Mammary epithelial cell (primary cell): ENCODE measurements at regions of chr17 and their contacts with region 1.

Region 1: DNA sequence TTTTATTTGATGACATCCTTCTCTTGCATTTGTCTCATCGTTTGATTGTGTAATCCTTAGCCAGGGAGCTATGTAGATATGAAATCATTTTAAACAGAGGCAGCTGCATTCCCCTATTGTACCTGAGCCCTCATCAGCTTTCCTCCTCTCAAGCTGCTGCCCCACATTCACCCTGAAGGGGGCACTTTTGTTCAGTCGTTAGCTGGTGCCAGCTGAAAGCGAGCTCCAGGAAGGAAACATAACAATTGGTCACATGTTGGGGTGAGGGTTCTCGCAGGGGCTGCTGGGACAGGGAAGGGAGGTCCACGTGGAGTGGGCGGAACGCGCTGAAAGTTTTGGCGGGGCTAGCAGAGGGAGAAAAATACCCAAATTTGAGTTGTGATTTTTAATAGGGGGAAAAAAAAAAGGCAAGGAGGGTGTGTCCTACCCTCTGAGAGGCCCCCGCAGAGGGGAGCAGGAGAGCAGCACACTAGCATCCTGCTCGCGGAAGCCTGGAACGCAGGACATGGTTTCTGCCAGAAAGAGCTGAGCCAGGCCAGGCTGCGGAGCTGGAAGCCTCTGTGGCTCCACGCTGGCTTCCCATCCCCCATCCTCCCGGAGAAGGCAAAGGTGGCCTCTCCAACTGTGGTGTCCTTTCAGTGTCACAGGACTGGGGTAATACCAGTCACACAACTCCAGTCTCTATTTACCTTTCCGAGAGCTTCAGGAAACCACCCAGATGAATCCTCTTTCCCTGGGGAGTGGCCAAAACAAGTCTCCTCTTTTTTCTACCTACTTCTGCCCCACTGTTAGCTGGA is 8.5 kb upstream of the MSL1 start:
- DNase-seq: peak; percentile 93
- H3K4me3 ChIP-seq: peak overlapping the region; percentile 26 to 43 (median 34)
- H3K27ac ChIP-seq: peak overlapping the region; percentile 70
- H3K4me1 ChIP-seq: peaks cover 45% of the 10 kb centered on the region
- H3K27me3 ChIP-seq: no peaks in the 10 kb centered on the region
- CTCF ChIP-seq: peak; percentile 51 to 90

Region 2: DNA sequence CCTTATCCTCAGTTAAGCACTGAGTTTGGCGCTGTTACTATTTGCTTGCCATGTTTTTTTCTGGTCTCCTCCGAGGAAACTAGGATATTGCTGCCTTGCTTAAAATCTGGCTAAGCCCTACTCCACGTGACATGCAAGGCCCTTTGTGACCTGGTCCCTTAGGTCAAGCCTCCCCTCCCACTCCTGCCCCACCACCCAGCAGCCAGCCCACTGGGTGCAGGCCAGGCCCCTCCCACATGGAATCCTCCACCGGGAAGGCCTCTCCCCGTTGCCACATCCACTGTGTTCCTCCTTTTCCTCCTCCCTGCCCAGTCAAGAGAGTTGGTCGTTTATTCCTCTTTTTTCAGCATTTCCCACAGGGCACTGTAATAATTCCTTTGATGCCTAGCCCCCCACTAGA is 116.5 kb before region 1 on chr17:
- CTCF ChIA-PET with region 1: interaction called, 22 read pairs
- dilution Hi-C with region 1: no loop called
- in situ Hi-C with region 1: no loop called
- intact Hi-C with region 1: no loop called
- DNase-seq: no peak
- H3K4me3 ChIP-seq: no peak overlapping the region
- H3K27ac ChIP-seq: no peak overlapping the region
- H3K4me1 ChIP-seq: no peaks in the 10 kb centered on the region
- H3K27me3 ChIP-seq: no peaks in the 10 kb centered on the region
- CTCF ChIP-seq: no peak

Region 3: GRCh38 chr17:40038882-40039513 is 74.3 kb before region 1 on chr17:
- CTCF ChIA-PET with region 1: interaction called, 7 read pairs
- dilution Hi-C with region 1: no loop called
- in situ Hi-C with region 1: no loop called
- intact Hi-C with region 1: loop called (anchors 1 kb)
- DNase-seq: peak; percentile 38
- H3K4me3 ChIP-seq: no peak overlapping the region
- H3K27ac ChIP-seq: no peak overlapping the region
- H3K4me1 ChIP-seq: peaks cover 3% of the 10 kb centered on the region
- H3K27me3 ChIP-seq: no peaks in the 10 kb centered on the region
- CTCF ChIP-seq: peak; percentile 56 to 68

Region 4: GRCh38 chr17:40056379-40057010 is 56.8 kb before region 1 on chr17:
- CTCF ChIA-PET with region 1: no interaction called
- dilution Hi-C with region 1: no loop called
- in situ Hi-C with region 1: no loop called
- intact Hi-C with region 1: no loop called
- DNase-seq: no peak
- H3K4me3 ChIP-seq: no peak overlapping the region
- H3K27ac ChIP-seq: no peak overlapping the region
- H3K4me1 ChIP-seq: peaks cover 3% of the 10 kb centered on the region
- H3K27me3 ChIP-seq: no peaks in the 10 kb centered on the region
- CTCF ChIP-seq: no peak

Region 5: DNA sequence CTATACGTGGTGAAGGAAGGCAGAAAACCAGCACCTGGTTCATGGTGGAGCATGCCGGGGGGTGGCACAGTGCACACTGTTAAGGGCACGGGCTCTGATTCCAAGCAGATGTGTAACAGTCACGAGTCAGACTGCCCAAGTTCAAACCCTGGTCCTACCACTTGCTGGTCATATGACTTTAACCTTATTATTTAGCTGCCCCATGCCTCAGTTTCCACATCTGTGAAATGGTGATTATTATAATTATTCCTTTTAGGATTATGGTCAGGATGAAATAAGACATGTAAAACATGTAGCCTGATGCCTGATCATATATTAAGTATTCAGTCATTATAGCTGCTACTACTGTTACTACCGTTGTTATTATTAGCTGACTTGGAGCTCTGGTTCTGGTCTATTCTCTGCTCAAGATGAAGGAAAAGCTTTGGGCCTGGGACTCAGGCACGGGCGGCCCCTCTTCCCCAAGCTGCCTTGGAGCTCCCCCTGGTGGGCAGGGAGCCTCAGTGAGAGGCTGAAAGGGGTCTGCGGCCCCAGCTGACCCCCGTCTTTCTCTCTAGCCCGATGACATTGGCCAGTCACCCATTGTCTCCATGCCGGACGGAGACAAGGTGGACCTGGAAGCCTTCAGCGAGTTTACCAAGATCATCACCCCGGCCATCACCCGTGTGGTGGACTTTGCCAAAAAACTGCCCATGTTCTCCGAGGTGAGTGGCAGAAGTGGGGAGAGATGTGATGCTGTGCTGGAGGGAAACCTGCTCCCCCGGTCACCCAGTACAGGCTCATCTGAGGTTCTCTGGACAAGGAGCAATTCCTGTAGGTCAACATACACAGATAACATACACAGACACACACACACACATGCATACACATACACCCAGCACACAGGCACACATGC is 26.9 kb before region 1 on chr17:
- CTCF ChIA-PET with region 1: no interaction called
- dilution Hi-C with region 1: no loop called
- in situ Hi-C with region 1: no loop called
- intact Hi-C with region 1: loop called (anchors 2 kb)
- DNase-seq: no peak
- H3K4me3 ChIP-seq: no peak overlapping the region
- H3K27ac ChIP-seq: no peak overlapping the region
- H3K4me1 ChIP-seq: no peaks in the 10 kb centered on the region
- H3K27me3 ChIP-seq: no peaks in the 10 kb centered on the region
- CTCF ChIP-seq: peak; percentile 54 to 87

Region 6: DNA sequence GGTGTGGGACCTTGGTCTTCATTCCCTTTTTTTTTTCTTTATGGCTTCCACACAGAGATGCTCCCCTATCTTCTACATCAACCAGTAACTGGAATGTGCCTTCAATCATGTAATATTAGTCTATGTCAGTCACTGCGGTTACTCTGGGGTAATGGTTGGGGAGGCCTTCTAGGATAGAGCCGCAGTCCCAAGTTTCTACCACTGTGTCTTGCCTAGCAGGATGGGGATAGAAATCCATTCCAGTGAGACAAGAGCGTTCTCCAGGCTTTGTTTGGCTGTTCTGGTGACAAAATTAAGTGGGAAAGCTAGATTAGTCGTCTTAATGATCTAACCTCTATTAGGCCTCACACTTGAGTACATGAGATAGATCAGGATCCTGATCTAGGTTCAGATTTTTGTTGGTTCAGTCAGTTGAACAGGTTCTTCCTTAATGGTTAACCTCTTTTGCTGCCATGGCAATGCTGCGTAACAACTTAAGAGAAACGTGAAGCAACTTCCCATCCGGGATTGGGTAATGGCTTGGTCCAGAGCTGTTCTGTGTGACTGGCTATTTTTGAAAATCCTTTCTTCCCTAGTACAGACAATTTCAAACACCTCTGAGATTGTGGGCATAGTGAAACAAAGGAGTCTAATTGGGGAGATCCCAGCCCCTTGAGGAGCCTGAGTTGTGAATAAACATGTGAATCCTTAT is 17.2 kb after region 1 on chr17:
- CTCF ChIA-PET with region 1: no interaction called
- dilution Hi-C with region 1: no loop called
- in situ Hi-C with region 1: no loop called
- intact Hi-C with region 1: no loop called
- DNase-seq: no peak
- H3K4me3 ChIP-seq: no peak overlapping the region
- H3K27ac ChIP-seq: no peak overlapping the region
- H3K4me1 ChIP-seq: no peaks in the 10 kb centered on the region
- H3K27me3 ChIP-seq: no peaks in the 10 kb centered on the region
- CTCF ChIP-seq: no peak

Region 7: DNA sequence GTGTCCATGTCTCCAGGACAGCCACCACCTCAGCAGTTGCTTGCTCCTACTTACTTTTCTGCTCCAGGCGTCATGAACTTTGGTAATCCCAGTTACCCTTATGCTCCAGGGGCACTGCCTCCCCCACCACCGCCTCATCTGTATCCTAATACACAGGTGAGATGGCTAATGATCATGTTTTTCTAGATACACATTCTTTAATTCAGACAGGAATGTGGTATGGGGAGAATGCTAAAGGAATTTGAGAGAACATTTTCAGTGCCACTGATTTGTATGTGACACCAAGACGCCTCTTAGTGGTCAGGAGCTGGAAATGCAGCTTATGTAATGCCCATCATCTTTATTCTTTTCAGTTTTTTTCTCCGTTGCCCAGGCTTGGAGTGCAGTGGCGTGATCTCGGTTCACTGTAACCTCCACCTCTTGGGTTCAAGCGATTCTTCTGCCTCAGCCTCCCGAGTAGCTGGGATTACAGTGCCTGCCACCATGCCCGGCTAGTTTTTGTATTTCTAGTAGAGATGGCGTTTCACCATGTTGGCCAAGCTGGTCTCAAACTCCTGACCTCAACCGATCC is 55.0 kb after region 1 on chr17:
- CTCF ChIA-PET with region 1: interaction called, 18 read pairs
- dilution Hi-C with region 1: loop called (anchors 10 kb)
- in situ Hi-C with region 1: no loop called
- intact Hi-C with region 1: loop called (anchors 1 kb)
- DNase-seq: peak; percentile 49
- H3K4me3 ChIP-seq: no peak overlapping the region
- H3K27ac ChIP-seq: no peak overlapping the region
- H3K4me1 ChIP-seq: peaks cover 3% of the 10 kb centered on the region
- H3K27me3 ChIP-seq: no peaks in the 10 kb centered on the region
- CTCF ChIP-seq: peak; percentile 75 to 80

Region 8: DNA sequence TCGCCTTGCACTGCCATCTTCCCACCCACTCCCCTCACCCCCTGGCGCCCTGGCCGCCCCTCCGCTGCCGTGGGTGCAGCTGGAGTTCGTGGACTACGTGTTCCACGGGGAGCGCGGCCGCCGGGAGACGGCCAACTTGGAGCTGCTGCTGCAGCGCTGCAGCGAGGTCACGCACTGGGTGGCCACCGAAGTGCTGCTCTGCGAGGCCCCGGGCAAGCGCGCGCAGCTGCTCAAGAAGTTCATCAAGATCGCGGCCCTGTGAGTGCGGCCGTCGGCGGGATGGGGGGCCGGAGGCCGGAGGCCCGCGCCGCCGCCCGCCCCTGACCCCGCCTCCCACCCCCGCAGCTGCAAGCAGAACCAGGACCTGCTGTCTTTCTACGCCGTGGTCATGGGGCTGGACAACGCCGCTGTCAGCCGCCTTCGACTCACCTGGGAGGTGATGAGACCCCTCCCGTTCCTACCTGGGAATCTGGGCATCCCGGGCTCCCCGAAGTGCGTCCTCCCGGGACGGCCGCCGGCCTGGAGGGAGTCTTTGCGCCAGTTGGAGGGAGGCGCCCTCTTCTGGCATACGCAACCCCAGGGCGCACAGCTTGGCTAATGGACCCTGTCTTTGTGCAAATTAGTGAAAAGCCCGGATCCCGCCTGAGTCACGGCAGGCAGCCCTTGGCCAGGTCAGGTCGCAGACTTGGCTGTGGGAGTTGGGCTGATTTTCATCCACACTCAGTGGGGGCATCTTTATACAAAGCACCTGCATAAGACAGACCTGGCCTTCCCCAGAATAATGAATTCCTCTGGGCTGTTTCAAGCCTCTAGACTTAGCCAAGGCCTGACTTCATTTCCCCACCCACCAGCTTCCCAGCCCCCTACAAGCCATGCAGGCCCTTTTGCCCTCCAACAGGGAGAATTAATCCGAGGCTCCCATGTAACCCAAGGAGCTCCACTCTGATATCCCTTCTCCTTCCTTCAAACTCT is 78.2 kb after region 1 on chr17:
- CTCF ChIA-PET with region 1: interaction called, 12 read pairs
- dilution Hi-C with region 1: no loop called
- in situ Hi-C with region 1: no loop called
- intact Hi-C with region 1: loop called (anchors 1 kb)
- DNase-seq: peak; percentile 75
- H3K4me3 ChIP-seq: peak overlapping the region in 2 of 3 experiments; percentile 37 to 41
- H3K27ac ChIP-seq: no peak overlapping the region
- H3K4me1 ChIP-seq: peaks cover 24% of the 10 kb centered on the region
- H3K27me3 ChIP-seq: no peaks in the 10 kb centered on the region
- CTCF ChIP-seq: peak; percentile 66 to 81

Region 9: GRCh38 chr17:40340880-40341807 is 227.8 kb after region 1 on chr17:
- CTCF ChIA-PET with region 1: no interaction called
- dilution Hi-C with region 1: no loop called
- in situ Hi-C with region 1: no loop called
- intact Hi-C with region 1: no loop called
- DNase-seq: peak; percentile 52
- H3K4me3 ChIP-seq: peak overlapping the region in 1 of 3 experiments; percentile 18
- H3K27ac ChIP-seq: no peak overlapping the region
- H3K4me1 ChIP-seq: peaks cover 52% of the 10 kb centered on the region
- H3K27me3 ChIP-seq: no peaks in the 10 kb centered on the region
- CTCF ChIP-seq: no peak

Region 10: GRCh38 chr17:40490289-40490853 is 377.1 kb after region 1 on chr17:
- CTCF ChIA-PET with region 1: no interaction called
- dilution Hi-C with region 1: no loop called
- in situ Hi-C with region 1: no loop called
- intact Hi-C with region 1: no loop called
- DNase-seq: peak; percentile 85
- H3K4me3 ChIP-seq: no peak overlapping the region
- H3K27ac ChIP-seq: peak overlapping the region; percentile 96
- H3K4me1 ChIP-seq: peaks cover 97% of the 10 kb centered on the region
- H3K27me3 ChIP-seq: no peaks in the 10 kb centered on the region
- CTCF ChIP-seq: peak in 1 of 2 donors; percentile 1